CD8-positive, alpha-beta T cell (primary cell): ENCODE measurements at regions of chr11 and their contacts with region 1.

Region 1: DNA sequence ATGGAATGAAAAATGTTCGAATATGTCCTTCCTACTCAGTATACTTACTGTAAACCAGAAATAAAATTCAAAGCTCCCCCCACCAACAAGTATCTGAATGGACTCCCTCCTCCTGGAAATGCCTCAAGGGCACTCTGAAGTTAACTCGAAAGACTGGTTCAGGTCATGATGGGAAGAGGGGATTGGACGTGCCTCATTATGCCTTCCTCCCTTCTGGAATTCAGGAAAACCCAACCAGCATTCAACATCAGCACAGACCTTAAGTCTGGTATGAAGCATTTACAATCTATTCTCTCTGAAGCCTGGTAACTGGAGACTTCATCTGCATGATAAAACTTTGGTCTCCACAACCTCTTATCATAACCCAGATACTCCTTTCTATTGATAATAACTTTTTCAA is 428.3 kb upstream of the RAG2 start:
- DNase-seq: no peak
- ATAC-seq: no peak
- H3K4me3 ChIP-seq: no peak overlapping the region
- H3K4me3 Mint-ChIP-seq: no peak overlapping the region
- H3K27ac ChIP-seq: no peak overlapping the region
- H3K27ac Mint-ChIP-seq: no peak overlapping the region
- H3K4me1 ChIP-seq: no peaks in the 10 kb centered on the region
- H3K4me1 Mint-ChIP-seq: no peaks in the 10 kb centered on the region
- H3K27me3 ChIP-seq: no peaks in the 10 kb centered on the region
- H3K27me3 Mint-ChIP-seq: no peaks in the 10 kb centered on the region
- CTCF ChIP-seq: no peak

Region 2: DNA sequence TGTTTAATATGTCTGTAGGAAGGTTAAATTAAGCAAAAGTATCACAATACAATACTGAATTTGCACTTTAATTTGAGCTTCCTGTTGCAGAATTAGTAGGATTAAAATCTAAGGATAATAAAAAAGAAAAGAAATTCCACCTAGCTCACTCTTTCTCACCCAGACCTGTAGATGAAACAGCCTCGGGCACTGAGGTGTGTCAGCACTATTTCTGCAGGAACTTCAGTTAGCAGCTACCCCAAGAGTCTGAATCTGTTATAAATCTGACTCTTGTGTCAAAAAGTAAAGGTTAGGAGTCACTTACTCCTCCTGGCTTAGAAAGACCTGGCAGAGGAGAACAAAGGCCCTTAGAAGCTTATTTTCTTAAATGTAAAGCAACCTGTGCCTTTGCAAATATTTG is 35.1 kb after region 1 on chr11:
- CTCF ChIA-PET with region 1: no interaction called
- POLR2A ChIA-PET with region 1: no interaction called
- intact Hi-C with region 1: loop called in 1 of 2 experiments (anchors 1 kb)
- DNase-seq: no peak
- ATAC-seq: no peak
- H3K4me3 ChIP-seq: no peak overlapping the region
- H3K4me3 Mint-ChIP-seq: no peak overlapping the region
- H3K27ac ChIP-seq: no peak overlapping the region
- H3K27ac Mint-ChIP-seq: no peak overlapping the region
- H3K4me1 ChIP-seq: no peaks in the 10 kb centered on the region
- H3K4me1 Mint-ChIP-seq: no peaks in the 10 kb centered on the region
- H3K27me3 ChIP-seq: no peaks in the 10 kb centered on the region
- H3K27me3 Mint-ChIP-seq: no peaks in the 10 kb centered on the region
- CTCF ChIP-seq: no peak

Region 3: GRCh38 chr11:37171451-37171850 is 145.1 kb after region 1 on chr11:
- CTCF ChIA-PET with region 1: no interaction called
- POLR2A ChIA-PET with region 1: no interaction called
- intact Hi-C with region 1: no loop called
- DNase-seq: no peak
- ATAC-seq: no peak
- H3K4me3 ChIP-seq: no peak overlapping the region
- H3K4me3 Mint-ChIP-seq: no peak overlapping the region
- H3K27ac ChIP-seq: no peak overlapping the region
- H3K27ac Mint-ChIP-seq: no peak overlapping the region
- H3K4me1 ChIP-seq: no peaks in the 10 kb centered on the region
- H3K4me1 Mint-ChIP-seq: no peaks in the 10 kb centered on the region
- H3K27me3 ChIP-seq: no peaks in the 10 kb centered on the region
- H3K27me3 Mint-ChIP-seq: no peaks in the 10 kb centered on the region
- CTCF ChIP-seq: no peak